Astrocyte of the cerebellum (primary cell): ENCODE measurements at regions of chr1 and their contacts with region 1.

Region 1: GRCh38 chr1:21324368-21325141 is 34.3 kb upstream of the ECE1 start:
- DNase-seq: peak; percentile 61
- H3K4me3 ChIP-seq: no peak overlapping the region
- CTCF ChIP-seq: no peak

Region 2: GRCh38 chr1:21270086-21270689 is 54.4 kb before region 1 on chr1:
- in situ Hi-C with region 1: loop called (anchors 5 kb)
- DNase-seq: no peak
- H3K4me3 ChIP-seq: no peak overlapping the region
- CTCF ChIP-seq: peak; percentile 87

Region 3: DNA sequence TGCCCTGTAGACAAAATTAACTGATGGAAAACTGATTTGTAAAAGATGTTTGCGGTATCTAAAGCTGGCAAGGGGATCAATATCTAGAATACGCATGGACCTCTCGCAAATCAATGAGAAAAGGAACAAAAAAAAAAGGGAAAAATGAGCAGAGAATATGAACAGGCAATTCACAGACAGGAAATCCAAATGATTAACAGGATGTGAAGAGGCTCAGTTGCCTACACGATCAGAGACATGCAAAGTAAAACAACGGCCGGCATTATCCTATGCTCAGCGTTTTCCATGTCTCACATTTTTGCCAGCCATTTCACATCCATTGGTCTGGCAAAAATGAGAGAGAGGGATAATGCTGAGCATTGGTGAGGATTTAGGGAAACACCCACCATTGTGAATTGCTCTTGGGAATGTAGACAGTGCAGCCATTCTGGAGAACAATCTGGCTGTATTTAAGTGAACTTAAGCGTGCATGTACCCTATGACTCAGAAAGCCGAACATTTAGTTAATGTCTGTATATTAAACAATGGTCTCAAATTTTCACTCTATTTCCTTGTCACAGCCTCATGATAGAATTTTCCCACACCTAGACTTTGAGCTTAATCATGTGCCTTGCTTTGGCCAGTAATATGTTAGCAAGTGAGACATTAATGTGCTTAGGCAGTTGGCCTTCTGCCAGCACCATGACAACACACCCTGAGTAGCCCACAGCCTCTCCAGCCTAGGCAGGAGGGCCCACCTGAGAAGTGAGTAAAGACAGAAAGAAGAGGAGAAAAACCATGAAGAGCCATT is 54.3 kb after region 1 on chr1:
- in situ Hi-C with region 1: no loop called
- DNase-seq: no peak
- H3K4me3 ChIP-seq: no peak overlapping the region
- CTCF ChIP-seq: no peak